ENCODE measurements at regions of chr12 and their contacts with region 1.

Region 1: GRCh38 chr12:96399919-96400797 is at the start of gene CDK17:
- DNase-seq: peak; percentile 77 to 80 (median 78)
- H3K4me3 ChIP-seq: peak within 1 kb of the TSS; percentile 84 to 85 (median 84)
- H3K4me3 Mint-ChIP-seq: peak within 1 kb of the TSS; percentile 91 to 94
- H3K27ac ChIP-seq: peak within 1 kb of the TSS; percentile 89 to 91
- H3K27ac Mint-ChIP-seq: peak within 1 kb of the TSS; percentile 89 to 96 (median 95)
- H3K4me1 ChIP-seq: peaks cover 21 to 31% of the 10 kb centered on the region in 2 donors
- H3K4me1 Mint-ChIP-seq: peaks cover 35% of the 10 kb centered on the region
- H3K27me3 ChIP-seq: no peaks in the 10 kb centered on the region
- H3K27me3 Mint-ChIP-seq: no peaks in the 10 kb centered on the region
- CTCF ChIP-seq: no peak
- polyA plus RNA-seq, gene CDK17: 3.6 to 6.9 (median 6.4) TPM

Region 2: GRCh38 chr12:96035278-96036236 is 364.6 kb before region 1 on chr12 and contains the start of gene LTA4H:
- intact Hi-C with region 1: loop called (anchors 10 kb)
- DNase-seq: peak; percentile 95 to 96 (median 96)
- H3K4me3 ChIP-seq: peak within 1 kb of the TSS; percentile 77 to 99 (median 98)
- H3K4me3 Mint-ChIP-seq: no peak within 1 kb of the TSS
- H3K27ac ChIP-seq: peak within 1 kb of the TSS; percentile 73 to 87
- H3K27ac Mint-ChIP-seq: no peak within 1 kb of the TSS
- H3K4me1 ChIP-seq: peaks cover 60 to 84% of the 10 kb centered on the region in 2 donors
- H3K4me1 Mint-ChIP-seq: peaks cover 34% of the 10 kb centered on the region
- H3K27me3 ChIP-seq: no peaks in the 10 kb centered on the region
- H3K27me3 Mint-ChIP-seq: no peaks in the 10 kb centered on the region
- CTCF ChIP-seq: no peak
- polyA plus RNA-seq, gene LTA4H: 278 to 963 (median 647) TPM

Region 3: GRCh38 chr12:96047229-96048211 is 352.6 kb before region 1 on chr12:
- intact Hi-C with region 1: loop called in 1 of 2 experiments (anchors 10 kb)
- DNase-seq: peak; percentile 88 to 95 (median 94)
- H3K4me3 ChIP-seq: peak overlapping the region in 2 of 3 experiments; percentile 33 to 51
- H3K4me3 Mint-ChIP-seq: peak overlapping the region; percentile 35 to 78
- H3K27ac ChIP-seq: peak overlapping the region; percentile 54 to 87
- H3K27ac Mint-ChIP-seq: peak overlapping the region; percentile 88 to 99 (median 97)
- H3K4me1 ChIP-seq: peaks cover 78 to 82% of the 10 kb centered on the region in 2 donors
- H3K4me1 Mint-ChIP-seq: peaks cover 81% of the 10 kb centered on the region
- H3K27me3 ChIP-seq: no peaks in the 10 kb centered on the region
- H3K27me3 Mint-ChIP-seq: peaks cover 0 to 3% (median 2%) of the 10 kb centered on the region in 3 donors
- CTCF ChIP-seq: no peak

Region 4: GRCh38 chr12:96350982-96351381 is 49.2 kb before region 1 on chr12:
- intact Hi-C with region 1: loop called in 1 of 2 experiments (anchors 5 kb)
- DNase-seq: peak; percentile 69 to 82 (median 80)
- H3K4me3 ChIP-seq: peak overlapping the region in 1 of 3 experiments; percentile 19
- H3K4me3 Mint-ChIP-seq: peak overlapping the region in 1 of 2 donors; percentile 7
- H3K27ac ChIP-seq: peak overlapping the region in 1 of 2 donors; percentile 78
- H3K27ac Mint-ChIP-seq: peak overlapping the region; percentile 63 to 93 (median 85)
- H3K4me1 ChIP-seq: peaks cover 26 to 41% of the 10 kb centered on the region in 2 donors
- H3K4me1 Mint-ChIP-seq: peaks cover 46% of the 10 kb centered on the region
- H3K27me3 ChIP-seq: no peaks in the 10 kb centered on the region
- H3K27me3 Mint-ChIP-seq: no peaks in the 10 kb centered on the region
- CTCF ChIP-seq: no peak

Region 5: GRCh38 chr12:96489103-96490056 is 89.2 kb after region 1 on chr12 and contains the start of gene CFAP54:
- intact Hi-C with region 1: loop called (anchors 5 to 10 kb)
- DNase-seq: peak; percentile 87 to 92 (median 88)
- H3K4me3 ChIP-seq: peak within 1 kb of the TSS; percentile 28 to 76 (median 46)
- H3K4me3 Mint-ChIP-seq: peak within 1 kb of the TSS; percentile 86 to 96
- H3K27ac ChIP-seq: no peak within 1 kb of the TSS
- H3K27ac Mint-ChIP-seq: peak within 1 kb of the TSS in 6 of 7 donors; percentile 52 to 92 (median 87)
- H3K4me1 ChIP-seq: peaks cover 4 to 10% of the 10 kb centered on the region in 2 donors
- H3K4me1 Mint-ChIP-seq: peaks cover 12% of the 10 kb centered on the region
- H3K27me3 ChIP-seq: peaks cover 6 to 18% of the 10 kb centered on the region in 2 donors
- H3K27me3 Mint-ChIP-seq: peaks cover 17 to 25% (median 23%) of the 10 kb centered on the region in 3 donors
- CTCF ChIP-seq: peak; percentile 90
- polyA plus RNA-seq, gene CFAP54: not detected

Region 6: GRCh38 chr12:96548384-96548783 is 148.2 kb after region 1 on chr12:
- intact Hi-C with region 1: no loop called
- DNase-seq: no peak
- H3K4me3 ChIP-seq: no peak overlapping the region
- H3K4me3 Mint-ChIP-seq: no peak overlapping the region
- H3K27ac ChIP-seq: no peak overlapping the region
- H3K27ac Mint-ChIP-seq: no peak overlapping the region
- H3K4me1 ChIP-seq: no peaks in the 10 kb centered on the region
- H3K4me1 Mint-ChIP-seq: peaks cover 4% of the 10 kb centered on the region
- H3K27me3 ChIP-seq: no peaks in the 10 kb centered on the region
- H3K27me3 Mint-ChIP-seq: peaks cover 0 to 2% (median 2%) of the 10 kb centered on the region in 3 donors
- CTCF ChIP-seq: no peak

Region 7: DNA sequence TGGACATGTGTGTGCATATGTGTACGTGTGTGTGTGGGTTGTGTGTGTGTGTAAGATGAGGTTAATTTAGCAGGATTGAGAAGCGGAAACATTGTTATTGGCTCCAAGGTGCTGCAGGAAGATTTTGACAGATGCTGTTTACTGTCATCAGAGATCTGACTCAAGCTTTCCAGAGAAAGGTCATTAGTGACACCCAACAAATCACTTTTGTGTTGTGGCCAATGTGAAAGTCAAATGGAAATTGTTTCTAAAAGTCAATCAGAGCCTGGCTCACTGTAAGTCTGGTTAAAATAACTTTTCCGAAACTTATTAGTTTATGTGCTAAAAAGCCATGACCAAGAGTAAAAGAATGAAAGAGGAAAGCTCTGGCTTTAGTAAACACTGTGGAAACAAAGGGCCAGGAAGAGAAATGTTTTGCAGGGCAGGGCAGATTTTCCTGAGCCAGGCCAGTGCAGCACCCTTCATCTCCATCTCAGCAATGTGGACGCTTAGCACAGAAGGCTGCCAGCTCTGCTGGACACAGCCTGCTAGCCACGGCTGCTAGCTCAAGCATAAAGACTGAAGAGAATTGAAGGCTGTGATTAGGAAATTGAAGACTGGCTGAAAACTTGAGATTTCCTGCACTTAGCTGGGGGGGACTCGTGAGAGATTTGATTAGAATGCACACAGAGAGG is 742.7 kb after region 1 on chr12:
- intact Hi-C with region 1: no loop called
- DNase-seq: no peak
- H3K4me3 ChIP-seq: no peak overlapping the region
- H3K4me3 Mint-ChIP-seq: no peak overlapping the region
- H3K27ac ChIP-seq: no peak overlapping the region
- H3K27ac Mint-ChIP-seq: no peak overlapping the region
- H3K4me1 ChIP-seq: no peaks in the 10 kb centered on the region
- H3K4me1 Mint-ChIP-seq: no peaks in the 10 kb centered on the region
- H3K27me3 ChIP-seq: no peaks in the 10 kb centered on the region
- H3K27me3 Mint-ChIP-seq: peaks cover 1 to 5% (median 3%) of the 10 kb centered on the region in 3 donors
- CTCF ChIP-seq: no peak